Posterior vena cava (tissue), 2 donors: ENCODE measurements at regions of chr3 and their contacts with region 1.

Region 1: GRCh38 chr3:29764603-29765254 is 483.9 kb downstream of the RBMS3 start:
- DNase-seq: no peak

Region 2: DNA sequence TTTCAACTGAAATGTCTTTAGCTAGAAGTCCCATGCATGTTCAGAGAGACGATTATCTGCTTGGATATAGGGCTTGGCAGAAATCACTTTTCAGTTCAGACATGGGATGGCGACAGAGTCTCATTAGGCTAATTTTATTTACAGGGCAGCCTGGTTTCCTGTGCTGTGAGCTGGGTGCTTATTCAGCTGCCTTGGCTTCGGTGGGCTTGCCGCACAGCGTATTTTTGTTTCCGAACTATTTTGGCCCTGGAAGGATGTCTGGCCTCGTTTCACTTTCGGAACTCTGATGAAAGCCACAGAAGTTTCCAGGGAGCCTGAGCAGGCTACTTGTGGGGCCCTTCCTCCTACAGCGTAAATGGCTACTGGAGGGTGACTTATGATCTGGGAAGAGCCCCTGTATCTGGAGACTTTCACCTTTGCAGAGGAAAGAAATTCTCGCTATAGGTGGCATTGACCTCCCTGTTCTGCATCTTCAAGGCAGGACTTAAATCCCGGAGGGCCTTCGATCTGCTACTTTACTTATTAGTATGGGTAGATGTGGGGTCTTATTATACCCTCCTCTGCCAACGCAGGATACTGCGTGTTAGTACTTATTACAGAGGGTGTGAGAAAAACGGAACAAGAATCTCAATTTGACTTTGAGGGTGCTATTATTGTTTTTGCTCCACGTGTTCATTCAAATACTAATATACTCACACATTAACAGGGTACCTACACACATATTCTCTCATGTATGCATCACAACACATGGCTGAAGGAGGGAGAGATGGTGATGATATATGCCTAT is 847.8 kb before region 1 on chr3:
- intact Hi-C with region 1: loop called in 1 of 2 experiments (anchors 10 kb)
- DNase-seq: peak; percentile 84

Region 3: DNA sequence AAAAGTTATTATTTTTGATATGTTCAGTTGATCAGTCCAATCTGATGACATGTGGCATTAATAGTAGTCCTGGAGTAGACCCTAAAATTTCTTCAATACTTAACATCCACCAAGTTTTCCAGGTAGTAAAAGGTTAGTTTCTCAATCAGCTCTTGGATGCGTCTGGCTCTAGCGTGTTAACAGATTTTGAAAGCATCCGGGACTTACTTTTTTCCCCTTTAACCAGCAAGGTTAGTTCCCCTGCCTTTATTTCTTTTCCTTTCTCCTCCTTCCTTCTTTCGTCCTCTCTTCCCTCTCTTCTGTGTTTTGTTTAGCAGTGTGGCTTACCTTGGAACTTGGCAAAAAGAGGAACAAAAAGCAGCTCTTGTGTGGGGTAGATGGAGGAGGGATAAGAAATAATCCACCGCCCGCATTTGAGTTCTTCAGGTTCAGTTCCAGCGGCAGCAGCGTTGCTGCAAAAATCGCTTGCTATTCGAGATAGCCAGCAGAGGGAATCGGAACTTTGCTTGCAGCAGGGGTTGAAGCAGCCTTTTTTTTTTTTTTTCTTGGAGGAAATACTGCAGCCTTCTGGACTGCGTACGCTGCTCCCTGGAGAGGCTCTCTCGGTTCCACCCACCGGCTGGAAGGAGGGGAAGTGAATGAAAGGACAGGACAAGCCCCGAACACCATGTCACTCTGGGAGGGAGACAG is 484.2 kb before region 1 on chr3 and contains the start of gene RBMS3:
- intact Hi-C with region 1: loop called in 1 of 2 experiments (anchors 10 kb)
- DNase-seq: peak; percentile 94
- total RNA-seq, gene RBMS3: 87.1 to 109 TPM

Region 4: DNA sequence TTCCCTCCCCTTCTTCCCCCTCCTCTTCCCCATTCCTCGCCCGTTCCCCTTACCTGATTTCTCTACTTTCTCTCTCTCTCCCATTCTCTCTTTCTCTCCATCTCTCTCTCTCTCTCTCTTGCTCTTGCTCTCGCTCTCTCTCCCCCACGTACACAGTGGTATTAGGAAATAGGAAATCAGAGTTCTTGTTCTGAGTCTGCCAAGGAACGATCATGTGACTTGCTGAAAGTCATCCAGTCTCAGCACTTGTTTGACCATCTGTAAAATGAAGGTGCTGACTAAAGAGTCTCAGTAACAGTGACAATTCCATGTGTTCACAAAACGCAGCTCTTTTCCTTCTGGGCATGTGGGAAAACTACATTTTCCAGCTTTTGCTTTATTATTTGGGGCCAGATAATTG is 396.6 kb after region 1 on chr3:
- intact Hi-C with region 1: no loop called
- DNase-seq: no peak